Spleen (tissue), 13 donors: ENCODE measurements at regions of chr6 and their contacts with region 1.

Region 1: DNA sequence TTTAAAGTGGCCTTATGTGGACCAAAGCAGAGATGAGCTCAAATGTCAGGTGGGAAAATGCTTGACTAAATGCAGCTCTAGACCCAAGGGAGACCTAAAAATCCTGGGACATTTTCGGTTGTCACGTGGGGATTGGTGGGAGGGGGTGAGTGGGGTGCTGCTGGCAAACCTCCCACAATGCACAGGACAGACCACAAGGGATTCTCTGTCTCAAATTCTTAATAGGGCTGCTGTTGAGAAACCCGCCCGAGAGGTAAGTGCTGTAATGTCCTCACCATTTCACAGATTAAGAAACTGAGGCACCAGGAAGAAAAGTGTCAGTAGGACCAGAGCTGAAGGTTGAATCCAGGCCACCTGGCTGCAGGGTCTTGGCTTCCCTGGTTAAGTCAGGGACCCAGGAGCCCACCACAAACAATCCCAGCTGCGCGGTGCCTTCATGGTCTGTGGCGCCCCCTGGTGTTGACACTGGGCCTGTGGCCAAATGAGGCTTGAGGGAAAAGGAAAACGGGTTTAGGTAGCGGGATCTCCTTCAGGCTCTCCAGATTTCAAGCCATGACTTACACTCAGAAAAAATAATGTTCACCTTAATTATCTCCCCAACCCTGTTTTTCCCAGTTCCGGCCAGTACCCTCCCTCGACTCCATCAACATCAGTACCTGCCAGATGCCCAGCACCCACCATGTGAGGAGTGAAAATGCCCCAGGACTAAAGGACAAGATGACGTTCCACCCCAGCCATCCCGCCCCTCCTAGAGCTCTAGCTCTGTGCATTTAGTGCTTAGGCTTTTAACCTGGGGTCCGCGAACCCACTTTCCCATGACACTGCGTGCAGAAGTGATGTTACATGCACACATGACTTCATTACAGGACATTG is 7.2 kb downstream of the HLA-G start:
- DNase-seq: no peak
- H3K4me3 ChIP-seq: no peak overlapping the region
- H3K27ac ChIP-seq: no peak overlapping the region
- H3K4me1 ChIP-seq: peaks cover 0 to 7% (median 0%) of the 10 kb centered on the region in 6 donors
- H3K27me3 ChIP-seq: peaks cover 3 to 72% (median 14%) of the 10 kb centered on the region in 7 donors
- CTCF ChIP-seq: peak in 10 of 11 experiments; percentile 48 to 90 (median 78)
- POLR2A ChIP-seq: no peak

Region 2: DNA sequence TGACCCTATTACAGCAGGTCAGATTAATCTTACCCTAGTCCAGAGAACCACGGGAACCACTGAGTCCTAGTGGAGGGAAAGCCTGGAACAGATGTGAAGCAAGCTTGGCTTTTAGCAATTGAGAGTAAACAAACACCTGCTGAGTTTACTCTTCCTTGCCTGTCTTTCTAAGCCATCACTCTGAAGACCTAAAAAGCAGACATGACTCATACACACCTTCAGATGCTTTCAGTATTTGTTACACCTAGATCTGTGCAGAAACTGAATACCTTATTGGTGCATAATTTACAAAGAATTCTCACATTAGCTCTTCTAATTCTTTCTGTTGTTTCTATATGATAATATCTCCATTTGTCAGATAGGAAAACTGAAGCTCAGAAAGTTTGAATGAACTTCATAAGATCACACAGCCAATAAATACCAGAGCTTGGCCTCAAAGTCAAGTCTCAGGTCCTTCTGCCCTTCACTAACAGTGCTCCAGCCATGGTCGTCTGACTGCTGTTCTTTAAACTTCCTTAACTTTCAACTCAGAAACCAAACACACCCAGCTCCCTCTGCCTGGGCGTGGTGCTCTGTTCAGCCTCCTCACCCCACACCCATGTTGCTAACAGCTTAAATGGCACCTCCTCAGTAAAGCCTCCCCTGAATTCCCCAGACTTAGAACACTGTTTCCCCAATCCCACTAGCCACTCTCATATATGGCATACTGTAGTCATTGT is 193.2 kb before region 1 on chr6:
- intact Hi-C with region 1: no loop called
- DNase-seq: no peak
- H3K4me3 ChIP-seq: no peak overlapping the region
- H3K27ac ChIP-seq: peak overlapping the region in 1 of 8 donors; percentile 41
- H3K4me1 ChIP-seq: peaks cover 0 to 6% (median 0%) of the 10 kb centered on the region in 6 donors
- H3K27me3 ChIP-seq: no peaks in the 10 kb centered on the region
- CTCF ChIP-seq: no peak
- POLR2A ChIP-seq: no peak

Region 3: DNA sequence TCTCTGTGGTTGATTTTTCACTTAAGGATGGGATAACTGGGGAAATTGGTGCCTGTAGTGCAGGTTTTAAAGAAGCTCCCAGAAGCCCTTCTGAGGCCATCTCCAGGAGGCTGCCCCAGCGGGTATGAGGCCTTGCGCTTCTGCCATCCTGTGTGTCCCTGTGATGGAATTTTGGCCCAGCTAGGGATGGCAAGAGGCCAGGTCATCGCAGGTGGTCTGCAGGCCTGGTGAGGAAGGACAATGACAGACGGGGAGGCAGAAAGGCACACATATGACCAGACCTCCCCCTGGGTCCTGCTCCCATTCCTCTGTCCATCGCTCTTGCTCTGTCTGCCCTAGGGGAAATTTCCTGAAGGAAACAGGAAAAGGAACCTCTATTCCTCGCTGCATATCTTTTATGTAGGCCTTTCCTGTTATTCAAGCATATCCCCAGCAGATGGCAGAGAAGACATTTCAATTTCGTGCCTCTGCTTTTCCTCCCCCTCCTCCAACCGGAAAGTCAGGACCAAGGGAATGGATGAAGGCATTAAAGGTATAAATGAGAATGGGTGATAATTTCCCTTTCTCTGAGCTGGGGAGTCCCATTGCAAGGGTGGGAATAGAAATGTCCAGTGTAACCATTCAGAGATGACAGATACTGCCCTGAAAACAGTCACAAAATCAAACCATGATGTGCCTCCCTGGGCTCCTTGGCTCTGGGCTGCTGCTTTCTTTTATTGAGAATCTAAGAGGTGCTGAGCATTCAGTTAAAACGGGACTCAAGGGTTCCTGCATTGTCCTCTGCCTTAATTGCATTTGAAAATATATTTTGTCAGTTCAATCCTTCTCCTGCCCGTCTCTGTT is 129.2 kb before region 1 on chr6:
- intact Hi-C with region 1: loop called (anchors 2 kb)
- DNase-seq: no peak
- H3K4me3 ChIP-seq: no peak overlapping the region
- H3K27ac ChIP-seq: peak overlapping the region in 2 of 8 donors; percentile 41 to 85
- H3K4me1 ChIP-seq: peaks cover 0 to 45% (median 19%) of the 10 kb centered on the region in 6 donors
- H3K27me3 ChIP-seq: peaks cover 0 to 18% (median 0%) of the 10 kb centered on the region in 7 donors
- CTCF ChIP-seq: peak; percentile 29 to 82 (median 65)
- POLR2A ChIP-seq: no peak

Region 4: DNA sequence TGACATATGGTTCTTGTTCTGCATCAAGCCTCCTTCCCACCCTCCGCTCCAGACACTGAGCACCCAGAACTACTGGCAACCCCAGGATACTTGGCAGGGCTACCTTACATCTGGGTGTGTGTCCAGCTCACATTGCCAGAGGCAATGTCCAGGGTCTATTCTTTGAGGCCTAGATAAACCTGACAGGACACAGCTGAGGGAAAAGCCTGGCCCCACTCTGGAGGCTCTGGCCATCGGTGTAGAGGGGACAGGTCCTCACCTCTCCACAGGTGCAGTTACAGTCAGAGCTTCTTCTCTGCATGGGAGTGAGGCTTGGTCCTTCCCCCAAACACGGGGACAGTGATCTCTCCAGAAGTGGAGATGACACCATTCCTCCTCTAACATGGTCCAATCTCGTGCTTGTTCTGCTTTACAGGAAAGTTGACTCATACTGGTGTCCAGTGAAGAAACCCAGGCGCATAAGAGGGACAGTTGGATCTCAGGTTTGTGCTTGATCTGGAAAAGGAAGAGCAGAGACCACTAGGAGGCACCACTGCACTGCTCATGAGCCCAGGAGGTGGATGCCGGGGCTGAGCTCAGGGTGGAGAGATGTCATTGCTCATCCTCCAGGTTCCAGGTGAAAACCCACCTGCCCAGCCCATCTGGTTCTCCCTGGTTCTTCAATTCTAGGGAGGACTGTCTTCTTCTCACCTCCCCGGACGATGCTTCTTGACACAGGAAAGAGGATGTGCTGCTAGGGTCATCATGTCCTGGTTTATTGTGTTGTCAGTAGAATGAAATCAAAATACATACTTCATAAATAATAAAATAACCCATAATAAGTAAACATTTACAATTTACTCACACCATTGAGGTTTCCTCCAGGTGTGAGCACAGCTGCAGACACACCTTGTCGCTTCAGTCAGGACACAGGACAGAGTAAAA is 96.8 kb before region 1 on chr6:
- intact Hi-C with region 1: loop called (anchors 2 kb)
- DNase-seq: peak; percentile 88
- H3K4me3 ChIP-seq: no peak overlapping the region
- H3K27ac ChIP-seq: no peak overlapping the region
- H3K4me1 ChIP-seq: peaks cover 0 to 16% (median 0%) of the 10 kb centered on the region in 6 donors
- H3K27me3 ChIP-seq: no peaks in the 10 kb centered on the region
- CTCF ChIP-seq: peak; percentile 51 to 88 (median 72)
- POLR2A ChIP-seq: no peak

Region 5: DNA sequence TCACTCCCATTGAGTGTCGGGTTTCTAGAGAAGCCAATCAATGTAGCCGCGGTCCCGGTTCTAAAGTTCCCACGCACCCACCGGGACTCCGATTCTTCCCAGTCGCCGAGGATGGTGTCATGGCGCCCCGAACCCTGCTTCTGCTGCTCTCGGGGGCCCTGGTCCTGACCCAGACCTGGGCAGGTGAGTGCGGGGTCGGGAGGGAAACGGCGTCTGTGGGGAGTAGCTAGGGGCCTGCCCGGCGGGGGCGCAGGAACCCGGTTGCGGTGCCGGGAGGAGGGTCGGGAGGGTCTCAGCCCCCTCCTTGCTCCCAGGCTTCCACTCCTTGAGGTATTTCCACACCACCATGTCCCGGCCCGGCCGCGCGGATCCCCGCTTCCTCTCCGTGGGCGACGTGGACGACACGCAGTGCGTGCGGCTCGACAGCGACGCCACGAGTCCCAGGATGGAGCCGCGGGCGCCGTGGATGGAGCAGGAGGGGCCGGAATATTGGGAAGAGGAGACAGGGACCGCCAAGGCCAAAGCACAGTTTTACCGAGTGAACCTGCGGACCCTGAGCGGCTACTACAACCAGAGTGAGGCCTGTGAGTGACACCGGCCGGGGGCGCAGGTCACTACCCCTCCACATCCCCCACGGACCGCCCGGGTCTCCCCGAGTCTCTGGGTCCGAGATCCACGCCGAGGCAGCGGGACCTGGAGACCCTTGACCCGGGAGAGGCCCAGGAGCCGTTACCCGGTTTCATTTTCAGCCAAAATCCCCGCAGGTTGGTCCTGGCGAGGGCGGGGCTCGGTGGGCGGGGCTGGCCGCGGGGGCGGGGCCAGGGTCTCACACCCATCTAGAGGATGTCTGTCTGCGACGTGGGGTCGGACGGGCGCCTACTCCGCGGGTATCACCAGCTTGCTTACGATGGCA is 42.4 kb before region 1 on chr6:
- intact Hi-C with region 1: no loop called
- DNase-seq: peak; percentile 91
- H3K4me3 ChIP-seq: peak overlapping the region; percentile 50 to 87 (median 74)
- H3K27ac ChIP-seq: peak overlapping the region; percentile 12 to 84 (median 67)
- H3K4me1 ChIP-seq: peaks cover 0 to 25% (median 14%) of the 10 kb centered on the region in 6 donors
- H3K27me3 ChIP-seq: peaks cover 0 to 44% (median 3%) of the 10 kb centered on the region in 7 donors
- CTCF ChIP-seq: peak; percentile 7 to 82 (median 58)
- POLR2A ChIP-seq: no peak